ENCODE measurements at regions of chr12 and their contacts with region 1.

Region 1: DNA sequence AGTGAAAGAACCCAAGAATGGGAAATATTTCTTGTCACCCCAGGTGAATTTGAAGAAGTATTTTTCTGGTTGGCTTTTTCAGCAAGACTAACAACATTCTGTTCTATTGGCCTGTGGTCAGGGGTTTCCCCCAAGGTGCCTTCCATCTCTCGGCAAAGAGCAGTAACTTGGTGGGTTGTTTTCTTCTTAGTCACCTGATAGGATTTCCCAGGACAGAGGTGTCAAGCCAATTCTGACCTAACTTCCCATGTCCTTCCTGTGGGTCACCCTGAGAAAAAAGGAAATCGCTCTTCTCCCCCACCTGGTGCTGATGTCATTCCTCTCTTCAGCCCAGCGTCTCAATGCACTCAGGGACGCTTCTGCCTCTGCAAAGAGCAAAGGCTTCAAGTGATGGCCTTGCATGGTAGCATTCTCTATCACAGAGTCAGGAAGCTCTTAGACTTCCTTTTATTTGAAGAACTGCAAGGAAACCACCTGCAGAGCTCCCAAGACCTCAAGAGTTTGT is 16.1 kb upstream of the IFNG start:
- DNase-seq: peak; percentile 87
- H3K4me3 Mint-ChIP-seq: peak overlapping the region; percentile 62
- H3K27ac Mint-ChIP-seq: peak overlapping the region; percentile 89
- H3K4me1 Mint-ChIP-seq: peaks cover 78% of the 10 kb centered on the region
- H3K27me3 Mint-ChIP-seq: no peaks in the 10 kb centered on the region

Region 2: GRCh38 chr12:68163560-68164081 is 12.0 kb before region 1 on chr12:
- CTCF ChIA-PET with region 1: interaction called, 10 read pairs
- intact Hi-C with region 1: loop called (anchors 1 kb)
- DNase-seq: peak; percentile 27
- H3K4me3 Mint-ChIP-seq: no peak overlapping the region
- H3K27ac Mint-ChIP-seq: peak overlapping the region; percentile 64
- H3K4me1 Mint-ChIP-seq: peaks cover 19% of the 10 kb centered on the region
- H3K27me3 Mint-ChIP-seq: no peaks in the 10 kb centered on the region

Region 3: GRCh38 chr12:68236421-68237059 is 60.9 kb after region 1 on chr12:
- CTCF ChIA-PET with region 1: no interaction called
- intact Hi-C with region 1: loop called (anchors 2 kb)
- DNase-seq: peak; percentile 43
- H3K4me3 Mint-ChIP-seq: peak overlapping the region; percentile 75
- H3K27ac Mint-ChIP-seq: peak overlapping the region; percentile 57
- H3K4me1 Mint-ChIP-seq: peaks cover 48% of the 10 kb centered on the region
- H3K27me3 Mint-ChIP-seq: no peaks in the 10 kb centered on the region

Region 4: DNA sequence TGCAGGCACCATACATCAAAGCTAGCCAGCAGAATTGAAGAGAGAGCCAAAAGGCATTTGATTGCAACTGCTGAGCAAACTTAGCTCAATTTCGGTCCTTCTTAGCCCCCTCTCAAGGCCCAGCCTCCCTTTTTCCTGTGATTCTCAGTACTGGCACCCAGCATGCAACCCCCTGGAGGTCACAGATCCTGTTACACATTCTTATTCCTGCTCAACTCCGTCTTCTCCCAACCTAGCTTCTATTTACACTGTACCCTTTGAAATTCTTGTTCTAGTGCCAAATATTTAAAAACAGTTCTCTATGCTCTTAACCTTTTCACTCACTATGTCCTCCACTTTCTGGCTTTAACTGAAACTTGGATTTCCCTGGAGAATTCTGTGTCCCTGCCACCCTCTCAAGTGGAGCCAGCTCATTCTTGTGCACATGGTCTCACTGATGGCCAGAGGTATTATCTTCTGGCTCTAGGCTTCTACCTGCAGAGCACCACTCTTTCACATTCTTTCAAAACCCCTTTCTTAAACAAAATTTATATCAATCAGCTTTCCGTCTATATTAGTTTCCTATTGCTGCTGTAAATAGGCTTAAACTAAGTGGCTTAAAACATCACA is 932.5 kb after region 1 on chr12:
- CTCF ChIA-PET with region 1: no interaction called
- intact Hi-C with region 1: no loop called
- DNase-seq: no peak
- H3K4me3 Mint-ChIP-seq: no peak overlapping the region
- H3K27ac Mint-ChIP-seq: no peak overlapping the region
- H3K4me1 Mint-ChIP-seq: no peaks in the 10 kb centered on the region
- H3K27me3 Mint-ChIP-seq: no peaks in the 10 kb centered on the region

Measured in activated naive CD4-positive, alpha-beta T cell treated with anti-CD3 and anti-CD28 coated beads for 36 hours (primary cell).